ENCODE measurements at regions of chr19 and their contacts with region 1.

Region 1: DNA sequence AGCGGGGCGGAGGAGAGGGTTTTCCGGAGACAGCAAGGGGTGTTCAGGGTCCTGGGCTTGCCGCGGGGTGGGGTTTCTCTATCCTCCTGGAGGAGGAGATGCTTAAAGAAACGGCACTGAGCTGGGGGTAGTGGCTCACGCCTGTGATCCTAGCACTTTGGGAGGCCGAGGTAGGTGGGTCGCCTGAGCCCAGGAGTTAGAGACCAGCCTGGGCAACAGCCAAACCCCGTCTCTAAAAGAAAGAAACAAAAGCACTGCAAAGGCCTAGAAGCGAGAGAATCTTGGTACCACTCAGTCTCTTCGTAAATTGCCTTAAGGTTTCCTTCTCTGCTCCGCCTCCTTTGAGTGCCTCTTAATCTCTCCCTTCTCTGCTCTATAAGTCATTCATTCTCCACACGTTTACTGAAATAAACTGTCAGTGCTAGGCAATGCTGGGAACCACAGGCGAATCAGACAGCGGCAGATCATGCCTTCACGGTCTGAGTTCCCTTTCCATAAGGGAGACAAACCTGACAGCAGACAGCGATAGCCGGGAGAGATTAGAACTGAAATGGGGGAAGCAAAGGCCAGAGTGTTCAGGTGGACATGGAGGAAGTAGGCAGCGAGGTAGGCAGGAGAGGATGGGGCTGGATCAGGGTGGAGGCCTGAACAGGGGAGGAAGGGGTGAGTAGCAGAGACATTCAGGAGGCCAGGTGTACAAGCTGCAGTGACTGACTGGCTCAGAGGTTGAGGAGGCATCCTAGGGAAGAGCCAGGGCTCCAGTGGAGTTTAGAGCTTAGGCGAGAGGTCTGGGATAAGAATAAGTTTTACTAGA is 580 bp downstream of the EIF3K start:
- DNase-seq: no peak
- ATAC-seq: no peak
- H3K4me3 ChIP-seq: peak overlapping the region; percentile 81 to 100 (median 91)
- H3K27ac ChIP-seq: peak overlapping the region; percentile 39 to 66 (median 65)
- H3K4me1 ChIP-seq: peaks cover 0 to 12% (median 3%) of the 10 kb centered on the region in 4 donors
- H3K27me3 ChIP-seq: no peaks in the 10 kb centered on the region
- CTCF ChIP-seq: no peak
- POLR2A ChIP-seq: no peak

Region 2: DNA sequence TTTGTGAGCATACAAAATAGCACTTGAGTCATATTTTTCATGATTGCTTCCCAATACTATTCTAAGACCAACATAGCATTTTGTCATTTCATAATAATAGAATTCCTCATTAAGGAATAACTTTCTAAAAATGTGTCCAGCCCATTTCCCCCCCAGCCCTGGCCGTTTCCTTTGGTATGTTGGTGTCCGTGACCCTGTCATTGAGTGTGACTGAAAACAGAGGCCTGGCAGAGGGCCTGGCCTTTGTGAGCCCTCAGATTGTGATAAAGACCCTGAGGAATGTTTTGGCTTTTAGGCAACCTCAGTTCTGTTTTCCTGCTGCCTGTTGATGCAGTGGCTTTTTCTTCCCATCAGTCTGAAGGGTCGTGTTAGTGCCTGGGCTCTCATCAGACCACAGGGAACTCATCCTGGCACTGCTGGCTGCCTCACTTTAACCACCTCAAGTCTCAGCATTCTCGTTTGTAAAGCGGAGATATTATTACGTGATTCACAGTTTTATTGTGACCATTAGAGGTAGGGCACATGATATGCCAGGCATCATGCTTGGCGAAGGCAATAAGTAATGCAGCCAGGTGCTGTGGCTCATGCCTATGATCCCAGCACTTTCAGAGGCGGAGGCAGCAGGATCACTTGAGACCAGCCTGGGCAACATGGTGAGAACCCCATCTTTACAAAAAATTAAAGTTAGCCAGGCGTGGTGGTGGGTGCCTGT is 341.4 kb before region 1 on chr19:
- intact Hi-C with region 1: no loop called
- DNase-seq: peak in 2 of 3 donors; percentile 54 to 62
- ATAC-seq: peak; percentile 75 to 84 (median 82)
- H3K4me3 ChIP-seq: no peak overlapping the region
- H3K27ac ChIP-seq: peak overlapping the region; percentile 20 to 40 (median 37)
- H3K4me1 ChIP-seq: no peaks in the 10 kb centered on the region
- H3K27me3 ChIP-seq: no peaks in the 10 kb centered on the region
- CTCF ChIP-seq: no peak
- POLR2A ChIP-seq: no peak

Region 3: DNA sequence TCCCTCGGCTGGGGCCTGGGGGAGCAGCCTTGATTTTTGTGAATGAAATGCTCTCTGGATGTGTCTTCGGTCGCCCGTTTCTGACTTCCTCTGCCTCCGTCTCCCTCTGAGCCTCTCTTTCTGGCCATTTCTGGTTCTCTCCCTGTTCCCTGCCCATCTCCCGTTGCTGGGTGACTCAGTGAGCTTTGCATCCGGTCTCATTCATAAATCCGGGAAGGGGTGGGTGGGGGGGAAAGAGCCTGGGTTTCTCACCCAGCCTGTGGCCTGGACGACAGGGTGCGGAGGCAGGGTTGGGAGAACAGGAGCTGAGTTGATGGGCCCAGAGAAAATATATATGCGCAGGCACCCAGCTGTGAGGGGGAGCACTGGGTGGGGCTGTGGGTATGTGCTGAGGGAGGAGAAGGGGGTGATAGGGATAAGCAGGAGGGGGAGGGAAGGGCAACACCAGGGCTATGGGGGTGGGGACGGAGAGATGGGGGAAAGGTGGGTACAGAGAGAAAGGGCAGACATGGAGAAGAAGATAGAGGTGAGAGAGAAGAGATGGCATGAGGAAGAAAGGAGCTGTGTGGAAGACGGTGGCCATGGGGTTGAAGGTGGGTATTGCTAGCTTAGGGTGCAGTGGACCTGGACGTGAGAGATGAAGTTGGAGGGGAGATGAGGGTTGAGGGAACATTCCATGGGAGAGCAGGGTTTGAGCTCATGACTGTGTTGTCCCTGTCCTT is 229.8 kb before region 1 on chr19:
- intact Hi-C with region 1: loop called in 1 of 2 experiments (anchors 10 kb)
- DNase-seq: no peak
- ATAC-seq: no peak
- H3K4me3 ChIP-seq: no peak overlapping the region
- H3K27ac ChIP-seq: no peak overlapping the region
- H3K4me1 ChIP-seq: peaks cover 0 to 9% (median 0%) of the 10 kb centered on the region in 4 donors
- H3K27me3 ChIP-seq: no peaks in the 10 kb centered on the region
- CTCF ChIP-seq: no peak
- POLR2A ChIP-seq: no peak

Region 4: DNA sequence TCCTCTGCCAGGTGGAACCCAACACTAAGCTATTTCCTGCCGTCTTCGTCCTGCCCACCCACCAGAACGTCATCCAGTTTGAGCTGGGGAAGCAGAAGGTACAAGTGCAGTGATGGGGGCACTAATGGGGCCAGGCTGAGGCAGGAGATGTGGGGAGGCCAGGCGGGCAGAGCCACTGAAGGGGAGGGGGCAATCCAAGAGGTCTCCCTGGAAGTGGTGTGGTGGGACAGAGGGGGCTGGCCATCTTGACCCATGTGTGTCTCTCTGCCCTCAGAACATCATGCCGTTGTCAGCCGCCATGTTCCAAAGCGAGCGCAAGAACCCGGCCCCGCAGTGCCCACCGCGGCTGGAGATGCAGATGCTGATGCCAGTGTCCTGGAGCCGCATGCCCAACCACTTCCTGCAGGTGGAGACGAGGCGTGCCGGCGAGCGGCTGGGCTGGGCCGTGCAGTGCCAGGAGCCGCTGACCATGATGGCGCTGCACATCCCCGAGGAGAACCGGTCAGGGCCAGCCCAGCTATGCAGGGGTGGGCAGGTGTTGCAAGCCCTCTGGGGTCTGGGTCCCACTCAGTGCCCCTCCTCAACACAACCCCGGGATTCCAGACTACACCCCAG is 136.4 kb before region 1 on chr19:
- intact Hi-C with region 1: no loop called
- DNase-seq: no peak
- ATAC-seq: peak in 1 of 4 donors; percentile 43
- H3K4me3 ChIP-seq: no peak overlapping the region
- H3K27ac ChIP-seq: no peak overlapping the region
- H3K4me1 ChIP-seq: no peaks in the 10 kb centered on the region
- H3K27me3 ChIP-seq: no peaks in the 10 kb centered on the region
- CTCF ChIP-seq: no peak
- POLR2A ChIP-seq: no peak